Activated CD4-positive, alpha-beta T cell treated with anti-CD3 and anti-CD28 coated beads for 36 hours (primary cell): ENCODE measurements at regions of chr16 and their contacts with region 1.

Region 1: DNA sequence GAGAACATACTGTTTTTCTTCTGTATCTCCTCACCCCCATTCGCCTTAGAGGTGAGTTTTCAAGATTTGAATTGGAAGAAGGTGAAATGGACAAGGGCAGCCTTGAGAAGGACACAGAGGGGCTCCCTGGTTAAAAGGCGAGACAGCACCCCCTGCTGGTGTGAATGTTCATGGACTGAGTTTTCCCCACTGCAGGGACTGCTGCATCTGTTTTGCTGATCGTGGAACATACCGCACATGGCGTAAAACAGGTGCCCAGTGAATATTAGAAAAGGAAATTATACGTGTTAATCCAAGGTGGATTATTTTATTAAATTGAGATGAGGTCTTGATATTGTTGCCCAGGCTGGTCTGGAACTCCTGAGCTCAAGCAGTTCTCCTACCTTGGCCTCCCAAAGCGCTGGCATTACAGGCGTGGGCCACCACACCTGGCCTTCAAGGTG is 54.5 kb downstream of the NDE1 start:
- DNase-seq: peak; percentile 86
- ATAC-seq: peak; percentile 79
- H3K4me3 Mint-ChIP-seq: no peak overlapping the region
- H3K27ac Mint-ChIP-seq: peak overlapping the region; percentile 72
- H3K4me1 Mint-ChIP-seq: peaks cover 23% of the 10 kb centered on the region
- H3K27me3 Mint-ChIP-seq: no peaks in the 10 kb centered on the region

Region 2: DNA sequence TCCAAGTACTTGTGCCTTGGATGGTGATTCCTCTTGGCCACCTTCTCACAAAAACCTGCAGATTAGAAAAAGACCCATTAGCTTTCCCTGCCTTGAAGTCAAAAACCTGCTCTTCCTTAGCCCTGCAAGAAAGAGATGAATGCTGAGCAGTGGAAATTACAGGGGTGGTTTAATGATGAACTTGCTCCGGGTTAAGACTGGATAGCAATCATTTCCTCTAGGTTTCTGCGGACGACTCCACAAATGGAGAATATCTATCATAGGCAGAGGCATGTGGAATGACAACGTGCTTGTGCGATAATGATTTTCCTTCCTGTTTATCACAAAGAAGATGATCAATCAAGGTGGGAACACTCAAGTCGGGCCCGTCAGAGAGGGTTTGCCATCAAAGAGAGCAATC is 1985.8 kb before region 1 on chr16:
- CTCF ChIA-PET with region 1: no interaction called
- POLR2A ChIA-PET with region 1: no interaction called
- intact Hi-C with region 1: no loop called
- DNase-seq: no peak
- ATAC-seq: no peak
- H3K4me3 Mint-ChIP-seq: no peak overlapping the region
- H3K27ac Mint-ChIP-seq: no peak overlapping the region
- H3K4me1 Mint-ChIP-seq: no peaks in the 10 kb centered on the region
- H3K27me3 Mint-ChIP-seq: peaks cover 3% of the 10 kb centered on the region

Region 3: GRCh38 chr16:15427648-15428239 is 276.8 kb before region 1 on chr16:
- CTCF ChIA-PET with region 1: interaction called, 4 read pairs
- POLR2A ChIA-PET with region 1: no interaction called
- intact Hi-C with region 1: loop called (anchors 1 kb)
- DNase-seq: peak; percentile 78
- ATAC-seq: peak; percentile 74
- H3K4me3 Mint-ChIP-seq: no peak overlapping the region
- H3K27ac Mint-ChIP-seq: no peak overlapping the region
- H3K4me1 Mint-ChIP-seq: peaks cover 2% of the 10 kb centered on the region
- H3K27me3 Mint-ChIP-seq: peaks cover 3% of the 10 kb centered on the region

Region 4: GRCh38 chr16:15650019-15650697 is 54.4 kb before region 1 on chr16 and contains the start of gene NDE1:
- CTCF ChIA-PET with region 1: interaction called, 3 read pairs
- POLR2A ChIA-PET with region 1: no interaction called
- intact Hi-C with region 1: loop called in 1 of 2 experiments (anchors 2 kb)
- DNase-seq: peak; percentile 94
- ATAC-seq: peak; percentile 92
- H3K4me3 Mint-ChIP-seq: peak within 1 kb of the TSS; percentile 100
- H3K27ac Mint-ChIP-seq: peak within 1 kb of the TSS; percentile 99
- H3K4me1 Mint-ChIP-seq: peaks cover 29% of the 10 kb centered on the region
- H3K27me3 Mint-ChIP-seq: no peaks in the 10 kb centered on the region
- total RNA-seq, gene NDE1: 107 to 117 TPM

Region 5: DNA sequence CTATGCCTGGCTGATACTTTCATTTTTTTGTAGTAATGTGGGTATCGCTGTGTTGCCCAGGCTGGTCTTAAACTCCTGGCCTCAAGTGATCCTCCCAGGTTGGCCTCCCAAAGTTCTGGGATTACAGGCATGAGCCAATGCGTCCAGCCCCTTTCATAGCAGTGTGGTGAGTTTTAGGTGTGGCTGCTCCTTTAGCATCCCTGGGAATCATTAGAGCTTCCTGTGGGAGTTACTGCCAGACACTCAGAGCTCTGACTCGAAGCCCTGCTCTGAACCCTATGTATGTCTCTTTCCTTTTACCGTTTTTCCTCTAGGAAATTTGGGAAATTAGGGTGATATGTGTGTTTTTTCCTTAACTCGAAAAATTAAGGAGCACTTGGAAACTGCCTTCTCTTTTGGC is 10.1 kb before region 1 on chr16:
- CTCF ChIA-PET with region 1: interaction called, 5 read pairs
- POLR2A ChIA-PET with region 1: interaction called, 11 read pairs
- intact Hi-C with region 1: no loop called
- DNase-seq: no peak
- ATAC-seq: no peak
- H3K4me3 Mint-ChIP-seq: no peak overlapping the region
- H3K27ac Mint-ChIP-seq: no peak overlapping the region
- H3K4me1 Mint-ChIP-seq: no peaks in the 10 kb centered on the region
- H3K27me3 Mint-ChIP-seq: no peaks in the 10 kb centered on the region